GM18951 (cell line): ENCODE measurements at regions of chr6 and their contacts with region 1.

Region 1: DNA sequence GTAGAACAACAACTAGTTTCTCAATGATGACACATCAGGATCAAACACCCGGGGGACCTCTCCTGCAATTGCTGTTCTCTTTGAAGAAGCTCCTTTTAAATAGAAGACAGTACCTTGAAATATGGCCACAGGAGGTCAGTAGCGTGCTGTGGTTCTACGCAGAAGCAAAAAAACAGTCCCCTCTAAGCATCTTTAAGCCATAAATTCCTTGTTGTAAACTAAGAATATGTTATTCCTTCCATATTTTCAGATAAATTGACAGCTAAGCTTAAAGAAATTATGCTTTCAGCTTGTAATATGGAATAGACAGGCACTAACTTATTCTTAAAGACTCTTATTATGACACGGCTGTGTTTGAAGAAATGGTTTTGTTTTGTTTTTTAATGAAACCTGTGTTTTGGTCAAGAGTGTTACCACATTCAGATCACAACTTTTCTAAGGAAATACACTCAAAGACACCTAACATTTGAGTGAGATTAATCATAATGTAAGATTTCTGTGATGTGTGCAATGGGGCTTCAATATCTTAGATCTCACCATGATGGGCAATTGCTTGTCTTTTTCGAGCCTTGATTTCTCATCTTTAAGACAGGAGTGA is 49.7 kb upstream of the IL20RA start:
- POLR2A ChIP-seq: no peak

Region 2: GRCh38 chr6:137056121-137056880 is 38.2 kb before region 1 on chr6:
- in situ Hi-C with region 1: no loop called
- POLR2A ChIP-seq: no peak

Region 3: DNA sequence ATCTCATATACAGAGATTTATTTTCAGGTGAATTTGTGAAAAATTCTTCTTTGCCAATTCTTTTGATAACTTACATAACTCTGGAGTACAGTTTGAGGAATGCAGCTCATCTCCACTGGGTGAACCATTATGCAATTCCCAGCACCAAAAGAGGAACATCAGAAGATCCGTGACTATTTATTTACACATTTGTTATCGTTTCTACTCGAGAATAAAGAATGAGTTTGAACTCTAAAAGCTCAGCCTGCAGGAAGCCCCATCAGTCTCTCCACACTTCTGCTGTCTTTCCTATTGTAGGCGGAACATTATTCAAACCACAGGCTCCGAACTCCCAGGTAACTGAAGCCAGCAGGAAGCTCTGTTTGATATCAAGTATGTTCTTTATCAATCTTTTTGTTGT is 220.6 kb after region 1 on chr6:
- in situ Hi-C with region 1: loop called (anchors 5 kb)
- POLR2A ChIP-seq: no peak

Region 4: DNA sequence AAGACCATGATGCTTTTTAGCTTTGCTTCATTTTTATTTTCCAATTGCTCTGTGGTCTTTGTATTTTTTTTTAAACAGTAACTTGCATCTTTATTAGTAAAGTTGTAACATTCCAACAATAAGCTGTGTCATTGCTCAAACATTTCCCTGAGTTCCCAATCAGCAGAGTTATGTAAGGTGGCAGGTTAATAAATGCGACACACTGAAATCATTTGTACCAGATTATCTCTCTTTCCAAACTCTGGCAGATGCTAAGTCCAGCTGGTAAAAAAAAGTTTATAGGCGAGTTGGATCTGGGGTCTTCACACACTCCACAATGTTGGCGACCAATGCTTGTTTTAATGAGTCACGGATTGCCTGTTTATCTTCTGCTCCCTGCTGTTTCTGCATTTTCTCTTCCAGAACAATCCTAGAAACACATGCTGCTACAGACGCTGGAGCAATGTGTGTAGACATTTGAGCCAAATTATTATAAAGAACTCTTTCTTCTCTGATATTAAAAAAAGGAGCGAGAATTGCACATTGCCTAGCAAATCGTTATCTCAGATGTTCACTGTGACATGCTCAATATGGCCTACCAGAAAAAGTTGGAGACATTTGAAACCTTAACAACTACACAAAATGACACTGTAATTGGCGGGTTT is 238.2 kb after region 1 on chr6:
- in situ Hi-C with region 1: no loop called
- POLR2A ChIP-seq: no peak